ENCODE measurements at regions of chr5 and their contacts with region 1.

Region 1: DNA sequence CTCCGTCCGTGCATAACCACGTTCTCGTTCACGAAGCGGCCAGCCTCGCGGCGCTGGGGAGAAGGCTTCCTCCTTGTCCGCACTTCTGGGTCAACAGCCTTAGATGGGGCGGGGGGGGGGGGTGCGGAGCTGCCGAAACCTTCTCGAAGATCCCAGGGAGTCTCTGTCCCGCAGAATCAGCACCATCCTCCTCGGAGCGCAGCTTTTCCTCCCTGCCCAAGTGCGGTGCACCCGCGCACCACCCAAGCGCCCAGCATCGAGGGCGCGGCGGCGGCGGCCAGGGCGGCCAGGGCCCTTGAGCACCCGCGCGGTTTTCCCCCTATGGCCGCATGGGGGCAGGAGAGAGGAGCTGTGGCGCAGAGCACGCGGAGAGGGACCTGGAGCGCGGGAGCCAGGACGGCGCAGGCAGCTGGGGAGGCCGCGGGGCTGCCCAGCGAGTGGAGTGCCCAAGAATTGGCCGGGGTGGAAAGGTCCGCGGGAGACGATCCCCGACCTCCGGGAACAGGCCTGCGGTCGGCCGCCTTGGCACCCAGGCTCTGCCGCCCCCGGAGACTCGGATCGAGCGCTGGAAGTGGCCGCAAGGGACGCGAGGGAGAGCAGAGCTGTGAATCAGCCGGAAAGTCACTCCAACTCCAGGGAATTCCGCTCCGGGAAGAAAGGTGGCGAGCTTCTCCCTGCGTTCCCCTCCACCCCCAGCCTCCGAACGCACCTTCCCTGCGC is 43.1 kb downstream of the TMEM174 start:
- DNase-seq: peak; percentile 93
- H3K27ac ChIP-seq: peak overlapping the region; percentile 63
- CTCF ChIP-seq: peak; percentile 98

Region 2: DNA sequence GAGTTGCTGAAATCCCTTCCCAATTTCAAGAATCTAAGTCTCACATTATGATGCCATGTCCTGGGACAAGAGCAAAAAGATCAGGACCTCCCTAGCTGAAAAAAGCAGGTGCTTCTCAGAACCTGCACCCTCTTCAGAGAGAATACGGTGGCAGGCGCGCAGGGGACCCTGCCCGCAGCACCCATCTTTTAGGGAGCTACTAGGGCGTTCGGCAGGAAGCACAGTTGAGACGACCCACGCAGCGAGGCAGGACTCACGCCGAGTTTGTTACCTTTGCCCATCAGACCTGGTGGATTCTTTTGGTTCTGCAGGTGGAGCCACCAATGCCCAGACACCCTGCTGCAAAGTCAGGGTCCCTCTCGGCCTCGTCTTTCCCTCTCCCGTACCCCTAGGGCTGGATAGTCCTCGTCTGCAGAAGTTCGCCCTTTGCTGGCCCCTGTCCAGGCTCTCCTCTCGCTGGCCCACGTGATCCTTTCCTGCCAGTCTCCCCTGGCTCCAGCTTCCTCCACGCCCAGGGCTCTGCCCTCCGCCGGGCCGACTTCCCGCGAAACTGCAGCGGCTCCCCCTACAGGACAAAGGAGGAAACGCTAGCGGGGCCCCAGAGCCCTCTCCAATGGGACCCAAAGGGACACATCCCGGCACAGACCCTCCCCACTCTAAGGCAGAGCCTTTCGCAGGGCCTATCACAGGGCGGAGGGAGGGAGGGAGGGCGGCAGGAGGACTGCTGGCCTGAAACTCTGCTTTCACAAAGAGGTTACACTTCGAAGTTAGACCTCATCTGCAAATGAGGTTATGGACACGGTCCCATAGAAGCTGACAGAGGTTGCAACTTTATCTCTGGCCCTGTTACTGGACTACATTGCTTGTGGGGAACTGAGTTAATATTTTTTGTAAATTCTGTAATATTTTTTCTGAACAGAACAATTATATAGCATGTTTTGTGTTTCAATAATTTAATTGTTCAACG is 14.2 kb before region 1 on chr5:
- CTCF ChIA-PET with region 1: interaction called, 27 read pairs
- POLR2A ChIA-PET with region 1: no interaction called
- DNase-seq: peak; percentile 94
- H3K27ac ChIP-seq: no peak overlapping the region
- CTCF ChIP-seq: peak; percentile 91

Region 3: GRCh38 chr5:73280821-73281746 is 65.0 kb after region 1 on chr5:
- CTCF ChIA-PET with region 1: interaction called, 23 read pairs
- POLR2A ChIA-PET with region 1: no interaction called
- DNase-seq: peak; percentile 90
- H3K27ac ChIP-seq: peak overlapping the region; percentile 79
- CTCF ChIP-seq: no peak

Region 4: DNA sequence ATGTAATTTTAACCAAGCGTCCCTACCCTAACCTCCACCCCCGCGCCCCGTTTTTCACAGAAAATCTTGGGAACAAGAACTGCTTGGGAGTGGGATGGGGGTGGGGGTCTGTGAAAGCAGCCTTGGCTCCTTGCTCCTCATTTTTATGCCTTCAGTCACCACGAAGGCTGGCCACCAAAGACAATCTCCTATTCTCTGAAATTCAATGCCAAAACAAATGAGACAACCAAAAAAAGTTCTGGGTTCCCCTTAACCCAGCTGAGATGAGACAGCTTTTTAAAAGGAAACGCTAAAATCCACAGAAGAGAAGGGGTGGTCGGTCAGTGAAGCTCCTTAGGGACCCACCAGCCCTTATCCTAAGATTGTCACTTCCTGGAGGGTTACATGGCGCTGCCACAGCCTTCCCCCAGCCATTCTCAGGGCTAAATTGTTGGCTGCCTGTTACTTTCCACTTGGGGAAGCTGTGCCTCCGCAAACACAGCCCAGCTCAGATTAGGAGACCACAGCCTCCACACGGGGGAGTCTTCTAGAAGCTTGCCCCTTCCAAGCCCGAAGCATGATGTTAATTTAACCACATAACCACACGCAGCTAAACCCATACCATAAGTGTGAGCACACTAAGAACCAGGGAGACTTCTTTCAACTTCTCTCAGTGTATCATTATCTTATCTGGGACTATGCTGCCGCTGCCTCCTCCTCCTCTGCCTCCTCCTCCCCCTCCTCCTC is 96.3 kb after region 1 on chr5:
- CTCF ChIA-PET with region 1: interaction called, 11 read pairs
- POLR2A ChIA-PET with region 1: no interaction called
- DNase-seq: no peak
- H3K27ac ChIP-seq: peak overlapping the region; percentile 78
- CTCF ChIP-seq: no peak

Region 5: GRCh38 chr5:73437101-73437776 is 221.2 kb after region 1 on chr5:
- CTCF ChIA-PET with region 1: interaction called, 14 read pairs
- POLR2A ChIA-PET with region 1: interaction called, 3 read pairs
- DNase-seq: peak; percentile 88
- H3K27ac ChIP-seq: peak overlapping the region; percentile 84
- CTCF ChIP-seq: peak; percentile 91

Region 6: DNA sequence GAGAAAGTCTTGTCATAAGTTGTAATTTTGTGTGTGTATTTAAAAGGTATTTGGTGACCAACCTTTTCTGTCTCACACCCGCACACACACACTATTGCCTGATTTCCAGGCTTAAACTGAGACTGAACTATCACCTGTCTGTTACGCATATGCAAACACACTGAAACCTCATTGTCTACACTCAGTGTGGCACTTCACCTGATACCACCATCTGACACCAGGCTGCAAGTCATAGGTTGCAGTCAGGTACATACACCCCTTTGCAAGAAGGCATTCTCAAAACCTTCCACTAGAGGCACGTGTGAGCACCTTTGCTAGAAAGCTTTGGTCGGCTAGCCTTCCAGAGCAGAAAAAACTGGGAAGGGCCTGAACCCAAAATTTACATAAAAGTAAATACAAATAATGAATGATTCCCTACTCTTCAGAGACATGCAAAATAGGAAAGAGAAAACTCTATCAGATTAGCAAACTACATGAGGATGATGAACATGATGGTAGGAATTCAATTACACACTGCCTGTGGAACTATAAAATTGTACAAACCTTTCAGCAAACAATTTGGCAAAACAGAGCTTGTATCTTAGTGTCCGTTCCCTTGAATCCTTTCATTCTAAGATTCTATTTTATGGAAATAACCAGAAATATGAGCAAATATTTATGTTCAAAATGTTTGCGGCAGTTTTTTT is 238.4 kb after region 1 on chr5:
- CTCF ChIA-PET with region 1: interaction called, 113 read pairs
- POLR2A ChIA-PET with region 1: no interaction called
- DNase-seq: peak; percentile 67
- H3K27ac ChIP-seq: no peak overlapping the region
- CTCF ChIP-seq: peak; percentile 97

Region 7: GRCh38 chr5:73587923-73588322 is 371.9 kb after region 1 on chr5:
- CTCF ChIA-PET with region 1: no interaction called
- POLR2A ChIA-PET with region 1: no interaction called
- DNase-seq: no peak
- H3K27ac ChIP-seq: no peak overlapping the region
- CTCF ChIP-seq: no peak

Measured in RWPE1 (cell line).